PC-3 (cell line): ENCODE measurements at regions of chr4 and their contacts with region 1.

Region 1: GRCh38 chr4:77921701-77922100 is 59.1 kb downstream of the MRPL1 start:
- DNase-seq: peak; percentile 88
- ATAC-seq: peak; percentile 91
- H3K4me3 ChIP-seq: peak overlapping the region; percentile 30; the same call in 1 of the 2 replicates
- H3K27ac ChIP-seq: peak overlapping the region; percentile 94
- H3K4me1 ChIP-seq: peaks cover 36% of the 10 kb centered on the region
- H3K27me3 ChIP-seq: no peaks in the 10 kb centered on the region
- CTCF ChIP-seq: no peak

Region 2: GRCh38 chr4:77862478-77863216 is 59.1 kb before region 1 on chr4 and contains the start of gene MRPL1:
- CTCF ChIA-PET with region 1: no interaction called
- POLR2A ChIA-PET with region 1: no interaction called
- intact Hi-C with region 1: loop called (anchors 1 kb)
- DNase-seq: peak; percentile 94
- ATAC-seq: peak; percentile 84
- H3K4me3 ChIP-seq: peak within 1 kb of the TSS; percentile 89
- H3K27ac ChIP-seq: peak within 1 kb of the TSS; percentile 83
- H3K4me1 ChIP-seq: peaks cover 16% of the 10 kb centered on the region; the same call in 1 of the 2 replicates
- H3K27me3 ChIP-seq: no peaks in the 10 kb centered on the region
- CTCF ChIP-seq: peak; percentile 17; the same call in 1 of the 2 replicates
- total RNA-seq, gene MRPL1: 16.7 and 23.0 TPM in 2 replicates

Region 3: GRCh38 chr4:77881460-77882278 is 40.0 kb before region 1 on chr4:
- CTCF ChIA-PET with region 1: no interaction called
- POLR2A ChIA-PET with region 1: no interaction called
- intact Hi-C with region 1: loop called (anchors 5 kb)
- DNase-seq: peak; percentile 72
- ATAC-seq: peak; percentile 99
- H3K4me3 ChIP-seq: no peak overlapping the region
- H3K27ac ChIP-seq: peak overlapping the region; percentile 49
- H3K4me1 ChIP-seq: peaks cover 16% of the 10 kb centered on the region
- H3K27me3 ChIP-seq: no peaks in the 10 kb centered on the region
- CTCF ChIP-seq: no peak

Region 4: GRCh38 chr4:77893451-77893850 is 28.2 kb before region 1 on chr4:
- CTCF ChIA-PET with region 1: no interaction called
- POLR2A ChIA-PET with region 1: interaction called, 10 read pairs
- intact Hi-C with region 1: no loop called
- DNase-seq: no peak
- ATAC-seq: no peak
- H3K4me3 ChIP-seq: no peak overlapping the region
- H3K27ac ChIP-seq: no peak overlapping the region
- H3K4me1 ChIP-seq: no peaks in the 10 kb centered on the region
- H3K27me3 ChIP-seq: no peaks in the 10 kb centered on the region
- CTCF ChIP-seq: no peak